Activated CD4-positive, alpha-beta T cell treated with anti-CD3 and anti-CD28 coated beads, Interleukin-2, amount 10 ng/mL, durations not matched to agents 24 days and 14 days (primary cell): ENCODE measurements at regions of chrX and their contacts with region 1.

Region 1: GRCh38 chrX:933611-934010 is 278.8 kb downstream of the CRLF2 start:
- DNase-seq: no peak
- H3K4me3 Mint-ChIP-seq: no peak overlapping the region
- H3K27ac Mint-ChIP-seq: no peak overlapping the region
- H3K4me1 Mint-ChIP-seq: no peaks in the 10 kb centered on the region
- H3K27me3 Mint-ChIP-seq: no peaks in the 10 kb centered on the region

Region 2: DNA sequence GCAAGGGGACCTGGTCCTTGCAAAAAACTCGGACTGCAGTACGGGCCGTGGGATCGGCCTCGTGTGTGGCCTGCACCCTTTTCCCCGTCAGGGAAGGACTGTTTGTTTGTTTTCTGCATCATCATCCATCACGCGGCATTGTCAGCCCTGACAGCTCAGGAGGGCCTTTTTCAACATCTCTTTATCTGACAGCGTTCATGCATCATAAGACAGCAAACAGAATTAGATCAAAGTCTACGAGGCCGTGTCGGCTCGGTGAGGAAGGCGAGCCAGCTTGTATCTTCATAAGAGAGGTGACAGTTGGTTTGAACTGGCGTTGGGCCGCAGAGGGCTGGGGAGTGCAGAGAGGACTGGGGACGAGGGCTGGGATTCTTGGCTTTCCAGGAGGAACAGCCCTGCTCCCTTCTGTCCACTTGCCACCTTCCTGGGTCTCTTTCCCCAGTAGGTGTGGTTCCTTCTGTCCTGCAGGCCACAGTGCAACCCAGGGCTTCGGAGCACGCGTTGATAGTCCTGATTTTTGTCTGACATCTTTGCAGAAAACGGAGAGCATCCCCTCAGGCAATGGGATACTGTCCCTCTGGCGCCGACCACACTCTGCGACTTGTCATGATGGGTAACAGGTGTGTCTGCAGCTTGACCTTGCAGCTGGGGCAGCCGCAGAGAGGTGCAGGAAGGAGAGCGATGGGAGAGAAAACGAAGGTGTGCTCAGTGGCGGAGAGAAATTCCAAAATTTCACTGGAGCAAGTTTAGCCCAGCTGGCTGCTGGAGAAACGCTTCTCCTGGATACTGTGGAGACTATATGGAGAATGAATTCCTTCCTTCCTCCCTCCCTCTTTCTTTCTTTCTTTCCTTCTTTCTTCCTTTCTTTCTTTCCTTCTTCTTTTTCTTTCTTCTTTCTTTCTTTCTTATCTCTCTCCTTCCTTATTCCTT is 407.1 kb before region 1 on chrX:
- intact Hi-C with region 1: no loop called
- DNase-seq: no peak
- H3K4me3 Mint-ChIP-seq: no peak overlapping the region
- H3K27ac Mint-ChIP-seq: no peak overlapping the region
- H3K4me1 Mint-ChIP-seq: no peaks in the 10 kb centered on the region
- H3K27me3 Mint-ChIP-seq: no peaks in the 10 kb centered on the region

Region 3: GRCh38 chrX:790041-790506 is 143.5 kb before region 1 on chrX:
- intact Hi-C with region 1: no loop called
- DNase-seq: no peak
- H3K4me3 Mint-ChIP-seq: no peak overlapping the region
- H3K27ac Mint-ChIP-seq: no peak overlapping the region
- H3K4me1 Mint-ChIP-seq: no peaks in the 10 kb centered on the region
- H3K27me3 Mint-ChIP-seq: peaks cover 15% of the 10 kb centered on the region

Region 4: DNA sequence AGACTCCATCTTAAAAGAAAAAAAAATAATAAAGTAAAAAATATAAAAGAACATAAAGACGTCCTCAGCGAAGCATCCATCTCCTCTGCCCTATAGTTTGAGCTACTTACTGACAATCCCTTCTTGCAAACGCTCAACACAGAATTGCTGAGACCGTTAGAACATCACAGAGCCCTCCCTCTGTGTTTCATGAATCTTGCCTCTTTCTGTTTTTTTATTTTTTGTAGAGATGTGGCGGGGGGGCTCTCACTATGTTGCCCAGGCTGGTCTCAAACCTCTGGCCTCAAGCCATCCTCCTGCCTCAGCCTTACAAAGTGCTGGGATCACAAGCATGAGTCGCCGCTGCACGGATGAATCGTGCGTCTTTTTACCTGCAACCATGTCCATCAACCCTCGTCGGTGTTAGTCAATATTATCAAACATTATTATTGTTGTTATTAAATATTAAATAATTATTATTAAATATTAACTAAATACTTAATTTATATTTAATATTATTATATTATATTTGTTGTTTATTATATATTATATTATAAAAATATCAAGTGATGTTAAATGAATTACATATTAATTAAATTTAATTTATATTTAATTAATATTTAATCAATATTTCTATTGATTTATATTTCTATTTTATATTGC is 78.2 kb after region 1 on chrX:
- intact Hi-C with region 1: loop called (anchors 5 kb)
- DNase-seq: no peak
- H3K4me3 Mint-ChIP-seq: no peak overlapping the region
- H3K27ac Mint-ChIP-seq: no peak overlapping the region
- H3K4me1 Mint-ChIP-seq: no peaks in the 10 kb centered on the region
- H3K27me3 Mint-ChIP-seq: no peaks in the 10 kb centered on the region